Activated B cell treated with CpG ODN at 0.5 μM for 24 hours (primary cell): ENCODE measurements at regions of chr1 and their contacts with region 1.

Region 1: DNA sequence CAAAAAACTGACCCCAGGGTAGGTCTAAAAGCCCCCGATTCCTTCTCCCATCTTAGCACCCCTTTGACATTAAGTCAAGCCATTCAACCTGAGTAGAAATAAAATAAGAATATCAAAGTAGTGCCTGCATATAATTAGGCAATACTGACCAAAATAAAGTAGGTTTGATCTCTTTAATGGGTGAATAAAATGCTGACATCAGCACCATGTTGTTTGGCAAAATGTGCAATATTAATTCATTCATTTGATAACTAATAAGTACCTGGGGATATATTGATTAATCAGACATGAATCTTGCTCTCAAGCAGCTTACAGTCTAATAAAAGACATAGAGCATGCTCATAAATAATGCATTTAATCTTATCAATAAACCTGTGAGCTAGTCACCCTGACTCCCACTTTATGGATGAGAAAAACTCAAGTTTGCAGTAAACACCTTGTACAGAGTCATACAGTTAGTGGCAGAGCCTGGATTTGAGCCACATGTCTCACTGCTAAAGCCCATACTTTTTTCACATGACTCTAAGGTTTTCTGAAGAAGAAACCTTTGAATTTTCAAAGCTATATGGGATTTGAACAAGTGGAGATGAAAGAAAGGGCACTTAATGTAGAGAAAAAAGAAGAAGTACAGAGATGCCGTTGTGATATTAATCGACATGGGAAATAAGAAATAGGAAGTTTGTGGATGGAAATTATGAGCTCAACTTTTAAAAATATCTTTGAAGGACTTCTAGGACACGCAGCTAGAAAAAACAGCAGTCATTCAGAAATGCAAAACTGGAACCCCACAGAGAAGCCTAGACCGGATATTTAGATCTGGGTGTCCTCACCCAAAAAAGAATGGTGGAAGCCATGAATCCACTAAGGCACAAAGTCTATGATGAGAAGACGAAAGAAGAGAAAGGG is 183.9 kb downstream of the TOMM20 start:
- DNase-seq: no peak
- ATAC-seq: peak; percentile 50
- H3K4me3 Mint-ChIP-seq: peak overlapping the region; percentile 58
- H3K27ac Mint-ChIP-seq: peak overlapping the region; percentile 81
- H3K4me1 Mint-ChIP-seq: peaks cover 39% of the 10 kb centered on the region
- H3K27me3 Mint-ChIP-seq: no peaks in the 10 kb centered on the region
- CTCF ChIP-seq: no peak

Region 2: GRCh38 chr1:234887016-234887900 is 57.4 kb before region 1 on chr1:
- CTCF ChIA-PET with region 1: no interaction called
- POLR2A ChIA-PET with region 1: no interaction called
- intact Hi-C with region 1: no loop called
- DNase-seq: no peak
- ATAC-seq: no peak
- H3K4me3 Mint-ChIP-seq: no peak overlapping the region
- H3K27ac Mint-ChIP-seq: no peak overlapping the region
- H3K4me1 Mint-ChIP-seq: peaks cover 20% of the 10 kb centered on the region
- H3K27me3 Mint-ChIP-seq: no peaks in the 10 kb centered on the region
- CTCF ChIP-seq: no peak

Region 3: GRCh38 chr1:234925440-234926263 is 19.0 kb before region 1 on chr1:
- CTCF ChIA-PET with region 1: no interaction called
- POLR2A ChIA-PET with region 1: interaction called, 10 read pairs
- intact Hi-C with region 1: loop called (anchors 2 kb)
- DNase-seq: no peak
- ATAC-seq: no peak
- H3K4me3 Mint-ChIP-seq: peak overlapping the region; percentile 78
- H3K27ac Mint-ChIP-seq: peak overlapping the region; percentile 78
- H3K4me1 Mint-ChIP-seq: peaks cover 30% of the 10 kb centered on the region
- H3K27me3 Mint-ChIP-seq: no peaks in the 10 kb centered on the region
- CTCF ChIP-seq: no peak

Region 4: DNA sequence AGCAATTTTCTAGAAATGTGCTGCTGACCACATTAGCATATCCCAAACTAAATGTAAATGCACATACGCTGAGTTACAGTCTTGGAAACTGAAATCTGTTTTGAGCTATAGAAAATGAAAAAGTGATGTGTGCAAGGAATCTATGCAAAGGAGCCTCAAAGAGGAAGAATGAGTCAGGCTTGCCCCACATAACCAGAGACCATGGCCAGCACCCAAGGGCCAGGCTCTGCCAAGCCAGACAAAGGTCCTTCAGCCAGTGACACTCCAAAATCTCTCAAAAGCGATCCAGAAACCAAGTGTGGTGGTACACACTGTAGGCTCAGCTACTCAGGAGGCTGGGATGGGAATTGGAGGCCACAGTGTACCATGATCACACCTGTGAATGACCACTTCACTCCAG is 11.2 kb before region 1 on chr1:
- CTCF ChIA-PET with region 1: no interaction called
- POLR2A ChIA-PET with region 1: interaction called, 6 read pairs
- intact Hi-C with region 1: loop called (anchors 1 kb)
- DNase-seq: no peak
- ATAC-seq: peak; percentile 86
- H3K4me3 Mint-ChIP-seq: peak overlapping the region; percentile 50
- H3K27ac Mint-ChIP-seq: peak overlapping the region; percentile 70
- H3K4me1 Mint-ChIP-seq: peaks cover 21% of the 10 kb centered on the region
- H3K27me3 Mint-ChIP-seq: no peaks in the 10 kb centered on the region
- CTCF ChIP-seq: no peak

Region 5: DNA sequence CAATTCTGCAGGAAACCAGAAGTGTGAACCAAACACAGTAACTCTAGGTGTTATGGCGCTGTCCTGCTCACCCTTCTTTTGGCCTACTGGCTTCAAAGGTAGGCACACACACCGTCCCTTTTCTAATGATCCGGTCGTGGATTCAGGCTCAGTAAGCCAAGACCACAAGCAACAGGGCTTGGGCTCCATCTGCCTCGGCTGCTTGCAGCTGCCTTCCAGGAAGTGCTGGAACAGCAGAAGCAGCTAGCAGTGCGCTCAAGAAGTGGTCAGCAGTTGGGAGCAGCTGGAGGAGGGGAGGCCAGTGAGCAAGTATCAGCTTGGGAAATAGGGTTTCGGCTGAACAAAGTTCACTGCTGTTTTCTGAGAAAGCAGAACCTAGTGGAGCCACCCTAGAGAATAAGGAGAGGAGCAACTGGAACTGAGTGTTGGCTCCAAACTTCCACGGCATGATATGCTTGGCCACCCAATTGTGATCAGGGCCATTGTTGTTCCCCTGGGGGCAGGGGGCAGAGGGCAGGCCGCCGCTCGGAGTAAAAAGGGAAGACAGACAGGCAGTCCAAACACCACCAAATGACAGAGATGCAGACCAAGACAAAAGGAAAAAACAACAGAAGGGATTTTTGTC is 10.5 kb after region 1 on chr1:
- CTCF ChIA-PET with region 1: interaction called, 4 read pairs
- POLR2A ChIA-PET with region 1: interaction called, 4 read pairs
- intact Hi-C with region 1: loop called (anchors 1 kb)
- DNase-seq: no peak
- ATAC-seq: peak; percentile 63
- H3K4me3 Mint-ChIP-seq: peak overlapping the region; percentile 76
- H3K27ac Mint-ChIP-seq: peak overlapping the region; percentile 88
- H3K4me1 Mint-ChIP-seq: peaks cover 58% of the 10 kb centered on the region
- H3K27me3 Mint-ChIP-seq: no peaks in the 10 kb centered on the region
- CTCF ChIP-seq: no peak